ENCODE measurements at regions of chr19 and their contacts with region 1.

Region 1: DNA sequence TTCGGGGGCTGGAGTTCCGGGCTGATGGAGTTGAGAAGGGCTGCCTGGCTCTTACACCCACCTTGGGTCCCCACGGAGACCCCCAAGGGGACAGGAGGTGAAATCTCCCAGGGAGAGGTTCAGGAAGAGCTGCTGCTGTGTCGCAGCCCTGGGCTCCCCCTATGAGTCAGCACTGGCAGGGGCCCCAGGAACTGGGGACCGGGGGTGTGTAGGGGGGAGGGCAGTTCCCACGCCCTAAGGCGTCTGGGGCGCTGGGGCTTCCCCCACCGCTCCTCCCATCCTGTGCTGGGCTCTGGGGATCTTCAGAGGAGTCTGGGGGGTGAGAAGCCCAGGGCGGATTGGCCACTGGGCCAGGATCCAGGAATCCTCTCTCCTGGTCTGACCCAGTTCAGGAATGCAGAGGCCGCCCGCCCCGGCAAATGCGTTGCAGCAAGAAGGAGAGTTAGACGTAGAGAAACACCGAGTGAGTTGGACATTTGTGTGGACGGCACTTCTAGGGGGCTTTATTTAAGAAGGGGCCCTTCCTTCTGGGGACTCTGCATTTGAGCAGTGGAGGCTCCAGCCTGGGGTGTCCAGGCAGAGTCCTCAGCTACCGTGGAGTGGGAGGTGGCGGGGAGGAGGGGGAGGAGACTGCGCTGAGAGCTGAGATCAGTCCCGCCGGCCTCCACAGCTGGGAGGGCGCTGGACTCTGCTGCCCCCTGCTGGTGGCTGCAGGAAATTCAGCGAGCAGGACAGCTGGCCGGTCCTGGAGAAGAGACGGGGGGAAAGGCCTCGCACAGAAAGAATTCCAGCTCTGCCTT is 15.0 kb upstream of the NANOS3 start:
- DNase-seq: peak in 1 of 2 experiments; percentile 99
- H3K4me3 ChIP-seq: peak overlapping the region; percentile 14 to 60 (median 40); a peak in 6 of 8 replicates
- H3K27ac ChIP-seq: no peak overlapping the region
- H3K4me1 ChIP-seq: peaks cover 4 to 7% (median 5%) of the 10 kb centered on the region in 4 experiments; a peak in 6 of 7 replicates
- H3K27me3 ChIP-seq: peaks cover 15 to 32% (median 24%) of the 10 kb centered on the region in 4 experiments
- CTCF ChIP-seq: peak; percentile 92 to 96 (median 94)
- EP300 ChIP-seq: 0 out of 3 replicates have a peak, but pooled peaks of 1 of the 2 experiments have one; percentile 44
- POLR2A ChIP-seq: 0 out of 3 replicates have a peak, but pooled peaks of 1 of the 2 experiments have one; percentile 15
- RAD21 ChIP-seq: peak; percentile 90 to 91

Region 2: GRCh38 chr19:13784731-13785452 is 77.0 kb before region 1 on chr19:
- CTCF ChIA-PET with region 1: interaction called, 70 read pairs
- POLR2A ChIA-PET with region 1: interaction called, 8 read pairs
- DNase-seq: peak in 1 of 2 experiments; percentile 88
- H3K4me3 ChIP-seq: peak overlapping the region in 1 of 4 experiments; percentile 7; a peak in 1 of 8 replicates
- H3K27ac ChIP-seq: 0 out of 2 replicates have a peak overlapping the region, but pooled peaks have one; percentile 11
- H3K4me1 ChIP-seq: peaks cover 0 to 3% (median 2%) of the 10 kb centered on the region in 4 experiments; a peak in 4 of 7 replicates
- H3K27me3 ChIP-seq: no peaks in the 10 kb centered on the region; a peak in 2 of 7 replicates
- CTCF ChIP-seq: peak; percentile 65 to 82 (median 80)
- EP300 ChIP-seq: no peak; a peak in 1 of 3 replicates
- POLR2A ChIP-seq: no peak
- RAD21 ChIP-seq: peak; percentile 78 to 82

Region 3: GRCh38 chr19:13804830-13805683 is 56.9 kb before region 1 on chr19:
- CTCF ChIA-PET with region 1: interaction called, 18 read pairs
- POLR2A ChIA-PET with region 1: interaction called, 4 read pairs
- DNase-seq: peak in 1 of 2 experiments; percentile 82
- H3K4me3 ChIP-seq: no peak overlapping the region
- H3K27ac ChIP-seq: no peak overlapping the region
- H3K4me1 ChIP-seq: no peaks in the 10 kb centered on the region; a peak in 1 of 7 replicates
- H3K27me3 ChIP-seq: no peaks in the 10 kb centered on the region
- CTCF ChIP-seq: peak; percentile 81 to 92 (median 87)
- EP300 ChIP-seq: no peak
- POLR2A ChIP-seq: no peak
- RAD21 ChIP-seq: peak; percentile 59 to 76

Region 4: DNA sequence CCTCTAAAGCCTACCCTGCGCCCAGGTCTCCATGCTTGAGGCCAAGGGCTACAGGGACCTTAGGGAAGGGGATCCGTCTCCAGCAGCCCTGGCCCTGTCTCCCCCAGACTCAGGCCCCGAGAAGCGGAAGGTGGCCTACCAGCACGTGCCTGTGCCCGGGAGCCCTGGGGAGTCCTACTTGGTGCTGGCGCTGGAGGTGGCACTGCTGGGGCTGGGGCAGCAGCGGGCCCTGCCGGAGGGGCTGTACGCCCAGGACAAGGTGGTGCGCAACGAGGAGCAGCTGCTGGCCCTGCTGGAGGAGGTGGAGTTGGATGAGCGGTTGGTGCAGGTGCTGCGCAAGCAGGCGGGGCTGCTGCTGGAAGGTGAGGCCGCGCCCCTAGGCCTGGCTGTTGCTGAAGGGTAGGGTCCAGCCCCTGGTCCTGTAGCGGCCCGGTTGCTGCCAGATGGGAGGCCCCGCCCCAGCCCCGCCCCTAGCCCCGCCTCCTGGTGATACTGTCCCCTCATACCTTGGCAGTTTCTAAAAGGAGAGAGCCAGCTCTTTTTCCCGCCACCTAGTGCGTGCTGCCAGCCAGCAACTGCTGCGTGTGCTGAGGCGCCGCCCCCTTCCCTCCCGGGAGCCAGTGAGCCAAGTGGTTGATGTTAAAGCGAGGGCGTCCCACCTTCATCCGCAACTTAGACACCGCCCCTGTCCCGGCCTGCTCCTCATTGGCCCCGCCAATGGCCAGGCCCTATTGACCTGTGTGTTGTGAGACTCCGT is 44.1 kb before region 1 on chr19:
- CTCF ChIA-PET with region 1: interaction called, 11 read pairs
- POLR2A ChIA-PET with region 1: interaction called, 6 read pairs
- DNase-seq: peak; percentile 93 to 98
- H3K4me3 ChIP-seq: peak overlapping the region; percentile 49 to 75 (median 58)
- H3K27ac ChIP-seq: peak overlapping the region; percentile 93
- H3K4me1 ChIP-seq: peaks cover 0 to 5% (median 4%) of the 10 kb centered on the region in 4 experiments; a peak in 5 of 7 replicates
- H3K27me3 ChIP-seq: no peaks in the 10 kb centered on the region
- CTCF ChIP-seq: no peak
- EP300 ChIP-seq: peak in 1 of 2 experiments; percentile 64; a peak in 1 of 3 replicates
- POLR2A ChIP-seq: peak; percentile 69 to 75
- RAD21 ChIP-seq: peak in 1 of 2 experiments; percentile 4; a peak in 1 of 4 replicates

Region 5: GRCh38 chr19:13833330-13834243 is 28.3 kb before region 1 on chr19:
- CTCF ChIA-PET with region 1: interaction called, 52 read pairs
- POLR2A ChIA-PET with region 1: interaction called, 9 read pairs
- DNase-seq: peak in 1 of 2 experiments; percentile 99
- H3K4me3 ChIP-seq: peak overlapping the region; percentile 39 to 63 (median 48); a peak in 7 of 8 replicates
- H3K27ac ChIP-seq: 0 out of 2 replicates have a peak overlapping the region, but pooled peaks have one; percentile 3
- H3K4me1 ChIP-seq: peaks cover 0 to 5% (median 1%) of the 10 kb centered on the region in 4 experiments; a peak in 3 of 7 replicates
- H3K27me3 ChIP-seq: no peaks in the 10 kb centered on the region
- CTCF ChIP-seq: peak; percentile 74 to 97 (median 75)
- EP300 ChIP-seq: no peak
- POLR2A ChIP-seq: peak in 1 of 2 experiments; percentile 70; a peak in 2 of 3 replicates
- RAD21 ChIP-seq: peak; percentile 46 to 66; a peak in 3 of 4 replicates

Region 6: GRCh38 chr19:13846557-13847406 is 15.2 kb before region 1 on chr19:
- CTCF ChIA-PET with region 1: interaction called, 32 read pairs
- POLR2A ChIA-PET with region 1: interaction called, 62 read pairs
- DNase-seq: peak in 1 of 2 experiments; percentile 98
- H3K4me3 ChIP-seq: peak overlapping the region; percentile 52 to 78 (median 64); a peak in 7 of 8 replicates
- H3K27ac ChIP-seq: peak overlapping the region; percentile 97
- H3K4me1 ChIP-seq: peaks cover 6 to 38% (median 30%) of the 10 kb centered on the region in 4 experiments
- H3K27me3 ChIP-seq: no peaks in the 10 kb centered on the region
- CTCF ChIP-seq: no peak
- EP300 ChIP-seq: peak in 1 of 2 experiments; percentile 89; a peak in 1 of 3 replicates
- POLR2A ChIP-seq: peak in 1 of 2 experiments; percentile 84; a peak in 2 of 3 replicates
- RAD21 ChIP-seq: no peak

Region 7: GRCh38 chr19:13872695-13873389 is 10.9 kb after region 1 on chr19:
- CTCF ChIA-PET with region 1: interaction called, 13 read pairs
- POLR2A ChIA-PET with region 1: interaction called, 7 read pairs
- DNase-seq: peak in 1 of 2 experiments; percentile 86
- H3K4me3 ChIP-seq: peak overlapping the region in 1 of 4 experiments; percentile 49; a peak in 3 of 8 replicates
- H3K27ac ChIP-seq: no peak overlapping the region
- H3K4me1 ChIP-seq: no peaks in the 10 kb centered on the region; a peak in 2 of 7 replicates
- H3K27me3 ChIP-seq: peaks cover 36 to 90% (median 66%) of the 10 kb centered on the region in 4 experiments
- CTCF ChIP-seq: peak; percentile 18 to 47 (median 36)
- EP300 ChIP-seq: no peak; a peak in 1 of 3 replicates
- POLR2A ChIP-seq: no peak
- RAD21 ChIP-seq: peak in 1 of 2 experiments; percentile 50; a peak in 3 of 4 replicates